ENCODE measurements at regions of chr20 and their contacts with region 1.

Region 1: GRCh38 chr20:5749952-5750779 is at the start of gene SHLD1:
- DNase-seq: peak; percentile 76
- H3K4me3 Mint-ChIP-seq: peak within 1 kb of the TSS; percentile 87
- H3K27ac Mint-ChIP-seq: peak within 1 kb of the TSS; percentile 92
- H3K4me1 Mint-ChIP-seq: peaks cover 9% of the 10 kb centered on the region
- H3K27me3 Mint-ChIP-seq: no peaks in the 10 kb centered on the region
- total RNA-seq, gene SHLD1: 11.0 and 11.8 TPM in 2 replicates

Region 2: GRCh38 chr20:5714261-5715041 is 35.7 kb before region 1 on chr20:
- intact Hi-C with region 1: loop called (anchors 1 kb)
- DNase-seq: peak; percentile 61
- H3K4me3 Mint-ChIP-seq: no peak overlapping the region
- H3K27ac Mint-ChIP-seq: peak overlapping the region; percentile 49
- H3K4me1 Mint-ChIP-seq: peaks cover 17% of the 10 kb centered on the region
- H3K27me3 Mint-ChIP-seq: no peaks in the 10 kb centered on the region